HEK293T (cell line): ENCODE measurements at regions of chr22 and their contacts with region 1.

Region 1: GRCh38 chr22:36528795-36529751 is at the start of gene EIF3D:
- DNase-seq: peak; percentile 97

Region 2: DNA sequence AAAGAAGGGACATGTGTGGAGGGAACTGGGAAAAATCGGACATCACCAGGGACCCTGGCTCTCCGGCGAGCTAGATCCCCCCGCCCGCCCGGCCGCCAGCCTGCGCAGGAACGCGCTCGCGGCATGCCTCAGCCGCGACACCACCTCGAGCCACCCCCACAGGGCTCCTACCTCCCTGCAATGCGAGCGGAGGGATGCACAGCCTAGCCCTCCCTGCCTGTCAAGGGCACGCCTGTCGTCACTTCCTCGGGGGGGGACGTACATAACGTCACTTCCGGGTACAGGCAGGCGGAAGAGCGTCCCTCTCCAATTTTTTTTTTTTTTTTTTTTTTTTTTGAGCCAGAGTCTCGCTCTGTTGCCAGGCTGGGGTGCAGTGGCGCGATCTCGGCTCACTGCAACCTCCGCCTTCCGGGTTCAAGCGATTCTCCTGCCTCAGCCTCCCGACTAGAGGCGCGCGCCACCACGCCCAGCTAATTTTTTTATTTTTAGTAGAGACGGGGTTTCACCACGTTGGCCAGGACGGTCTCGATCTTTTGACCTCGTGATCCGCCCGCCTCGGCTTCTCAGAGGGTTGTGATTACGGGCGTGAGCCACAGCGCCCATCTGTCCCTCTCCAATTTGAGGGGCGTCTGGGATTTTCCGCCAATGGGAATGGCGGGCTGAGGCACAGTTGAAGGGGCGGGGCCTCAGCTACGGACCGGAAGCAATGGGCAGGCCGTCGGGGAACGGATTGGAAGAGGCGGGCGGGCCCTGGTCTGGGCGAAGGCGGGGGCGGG is 47.5 kb before region 1 on chr22 and contains the start of gene TXN2:
- CTCF ChIA-PET with region 1: interaction called, 3 read pairs
- POLR2A ChIA-PET with region 1: interaction called, 16 read pairs
- DNase-seq: peak; percentile 98

Region 3: GRCh38 chr22:36492109-36492508 is 37.0 kb before region 1 on chr22:
- CTCF ChIA-PET with region 1: no interaction called
- POLR2A ChIA-PET with region 1: no interaction called
- DNase-seq: no peak

Region 4: DNA sequence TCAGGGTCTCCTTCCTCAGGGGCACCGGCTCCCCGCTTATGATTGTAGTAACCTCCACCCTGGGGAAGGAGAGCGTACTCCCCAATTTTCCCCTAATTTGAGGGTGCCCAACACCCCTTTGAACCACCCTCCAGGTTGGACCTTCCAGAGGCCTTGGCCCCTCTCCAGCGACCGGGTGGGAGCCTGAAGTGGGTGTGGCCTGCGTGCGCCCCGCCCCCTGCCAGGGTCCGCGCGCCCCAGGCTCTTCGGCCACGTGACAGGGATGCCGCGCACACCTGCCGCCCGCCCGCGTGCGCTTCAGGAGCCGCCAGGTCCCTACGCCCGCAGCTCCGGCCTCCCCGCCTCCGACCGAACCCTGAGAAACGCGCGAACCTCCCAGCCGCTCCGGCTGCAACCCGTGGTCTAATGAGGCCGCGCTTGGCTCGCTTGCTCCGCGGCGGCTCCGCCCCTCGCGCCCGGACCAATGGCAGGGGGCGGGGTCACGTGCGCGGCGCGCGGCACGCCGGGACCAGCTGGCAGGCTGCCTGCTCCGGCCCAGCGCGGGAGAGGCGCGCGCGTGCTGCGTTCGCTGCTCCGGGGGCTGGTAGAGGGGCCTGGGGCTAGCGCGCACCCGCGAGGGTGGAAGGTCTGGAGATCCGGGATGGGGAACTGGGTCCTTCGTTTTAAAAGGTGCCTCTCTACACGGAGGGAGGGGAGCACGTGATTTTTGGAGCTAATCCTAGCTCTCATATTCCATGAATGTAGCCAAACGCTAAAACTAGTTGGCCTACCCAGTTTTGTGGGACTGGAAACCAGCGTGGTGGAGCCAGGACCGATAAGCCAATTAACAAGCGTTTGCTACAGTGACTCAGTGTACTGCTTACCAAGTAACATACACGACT is 22.2 kb before region 1 on chr22 and contains the start of gene FOXRED2:
- CTCF ChIA-PET with region 1: interaction called, 7 read pairs
- POLR2A ChIA-PET with region 1: interaction called, 30 read pairs
- DNase-seq: peak; percentile 99

Region 5: GRCh38 chr22:36514766-36515165 is 14.3 kb before region 1 on chr22:
- CTCF ChIA-PET with region 1: interaction called, 7 read pairs
- POLR2A ChIA-PET with region 1: interaction called, 22 read pairs
- DNase-seq: no peak

Region 6: GRCh38 chr22:36546092-36546804 is 17.2 kb after region 1 on chr22:
- CTCF ChIA-PET with region 1: no interaction called
- POLR2A ChIA-PET with region 1: interaction called, 17 read pairs
- DNase-seq: peak; percentile 91

Region 7: GRCh38 chr22:36599771-36600170 is 70.7 kb after region 1 on chr22:
- CTCF ChIA-PET with region 1: no interaction called
- POLR2A ChIA-PET with region 1: no interaction called
- DNase-seq: no peak

Region 8: DNA sequence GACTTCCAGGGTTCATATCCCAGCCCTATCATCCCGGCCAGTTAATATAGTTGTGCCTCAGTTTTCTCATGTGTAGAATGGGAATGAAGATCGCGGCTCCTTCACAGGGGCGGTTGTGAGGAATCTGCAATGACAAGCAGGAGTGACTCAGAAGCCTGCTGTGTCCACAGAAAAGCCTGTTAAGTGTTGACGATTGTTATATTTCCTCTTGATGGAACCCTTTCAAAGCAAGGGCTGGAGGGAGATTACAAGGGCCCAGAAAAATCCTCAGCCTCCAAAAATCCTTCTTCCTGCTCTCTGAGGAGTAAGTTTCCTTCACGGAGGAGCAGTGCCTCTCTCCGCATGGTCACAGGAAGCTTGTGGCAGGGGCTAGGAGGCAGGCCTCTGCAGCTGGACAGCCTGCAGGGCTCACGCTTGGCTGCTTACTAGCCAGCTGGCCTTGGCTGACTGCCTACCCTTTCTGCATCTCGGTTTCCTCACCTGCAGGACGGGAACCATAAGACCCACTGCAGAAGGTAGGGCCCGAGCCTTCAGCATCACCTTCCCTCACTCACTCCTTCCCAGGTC is 111.1 kb after region 1 on chr22:
- CTCF ChIA-PET with region 1: no interaction called
- POLR2A ChIA-PET with region 1: no interaction called
- DNase-seq: no peak

Region 9: DNA sequence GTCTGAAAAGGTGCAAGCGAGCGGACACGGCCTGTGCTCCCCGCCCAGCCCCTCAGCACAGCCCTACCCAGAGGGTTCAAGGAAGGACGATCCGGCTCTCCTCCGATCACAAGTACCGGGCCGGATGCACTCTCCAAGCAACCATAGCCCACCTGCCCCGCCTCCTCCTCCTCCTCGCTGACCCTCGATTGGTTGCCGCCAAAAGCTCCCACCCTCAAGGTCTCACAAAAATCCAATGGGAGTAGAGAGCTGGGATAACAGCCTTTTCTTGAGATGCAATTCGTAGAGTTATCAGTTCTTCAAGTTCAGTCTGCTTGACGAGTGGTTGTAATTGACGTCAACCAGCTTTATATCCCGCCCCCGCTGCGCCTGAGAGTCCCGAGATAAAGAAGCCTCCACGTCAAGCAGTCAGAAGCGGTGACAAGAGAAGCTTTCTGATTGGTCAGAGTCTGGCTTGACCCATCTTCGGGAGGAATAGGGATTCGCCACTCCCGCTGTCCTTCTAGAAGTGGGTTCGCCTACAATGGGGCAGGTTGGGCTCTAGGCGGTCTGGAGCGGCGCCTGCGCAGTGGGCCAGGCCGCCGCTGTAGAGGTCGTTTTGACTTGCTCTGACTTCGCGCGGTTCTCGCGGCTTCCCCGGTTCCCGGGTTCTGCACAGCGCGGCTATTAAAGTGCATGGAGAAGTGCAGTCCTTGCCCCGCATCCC is 247.0 kb after region 1 on chr22 and contains the start of gene IFT27:
- CTCF ChIA-PET with region 1: interaction called, 5 read pairs
- POLR2A ChIA-PET with region 1: interaction called, 18 read pairs
- DNase-seq: peak; percentile 100